ENCODE measurements at regions of chr2 and their contacts with region 1.

Region 1: GRCh38 chr2:130797493-130798435 is 39.0 kb upstream of the ARHGEF4 start:
- DNase-seq: peak; percentile 94
- ATAC-seq: peak; percentile 95
- H3K4me3 Mint-ChIP-seq: peak overlapping the region; percentile 67
- H3K27ac Mint-ChIP-seq: peak overlapping the region; percentile 49
- H3K4me1 Mint-ChIP-seq: peaks cover 14% of the 10 kb centered on the region
- H3K27me3 Mint-ChIP-seq: peaks cover 8% of the 10 kb centered on the region

Region 2: GRCh38 chr2:130776550-130776949 is 21.2 kb before region 1 on chr2:
- CTCF ChIA-PET with region 1: no interaction called
- POLR2A ChIA-PET with region 1: no interaction called
- DNase-seq: no peak
- ATAC-seq: no peak
- H3K4me3 Mint-ChIP-seq: no peak overlapping the region
- H3K27ac Mint-ChIP-seq: no peak overlapping the region
- H3K4me1 Mint-ChIP-seq: no peaks in the 10 kb centered on the region
- H3K27me3 Mint-ChIP-seq: peaks cover 4% of the 10 kb centered on the region

Region 3: GRCh38 chr2:130824492-130825061 is 26.8 kb after region 1 on chr2:
- CTCF ChIA-PET with region 1: interaction called, 17 read pairs
- POLR2A ChIA-PET with region 1: no interaction called
- DNase-seq: peak; percentile 81
- ATAC-seq: peak; percentile 95
- H3K4me3 Mint-ChIP-seq: peak overlapping the region; percentile 4
- H3K27ac Mint-ChIP-seq: peak overlapping the region; percentile 77
- H3K4me1 Mint-ChIP-seq: peaks cover 24% of the 10 kb centered on the region
- H3K27me3 Mint-ChIP-seq: no peaks in the 10 kb centered on the region

Region 4: DNA sequence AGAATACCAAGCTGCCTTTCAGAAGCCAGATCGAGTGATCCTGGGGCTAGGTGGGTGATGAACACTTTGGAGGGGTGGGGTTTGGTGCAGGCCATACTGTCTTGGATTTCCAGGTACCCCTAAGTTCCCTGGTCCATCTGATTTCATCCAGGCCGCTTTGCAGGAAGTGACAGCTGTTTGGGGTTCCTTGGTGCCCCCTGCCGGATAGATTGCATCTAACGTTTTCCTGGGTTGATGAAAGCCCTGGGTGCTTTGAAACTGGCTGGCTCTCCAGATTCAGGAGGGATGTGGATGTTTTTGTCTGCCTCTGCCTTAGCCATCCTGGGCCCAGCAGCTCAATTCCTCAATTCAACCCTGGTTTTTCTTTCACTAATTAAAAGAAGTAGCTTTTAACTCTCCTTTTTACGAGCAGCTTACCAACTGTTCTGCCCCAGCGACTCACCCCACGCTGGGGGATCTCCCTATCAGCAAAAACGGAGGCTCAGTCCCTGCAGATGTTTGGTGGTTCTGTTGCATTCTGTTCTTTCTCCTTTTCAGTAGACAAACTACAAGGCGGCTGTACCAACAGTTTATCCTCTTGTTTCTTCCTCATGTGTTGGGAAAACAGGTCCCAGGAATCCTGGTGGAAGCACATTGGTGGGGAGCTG is 76.1 kb after region 1 on chr2:
- CTCF ChIA-PET with region 1: interaction called, 164 read pairs
- POLR2A ChIA-PET with region 1: interaction called, 14 read pairs
- DNase-seq: peak; percentile 81
- ATAC-seq: peak; percentile 83
- H3K4me3 Mint-ChIP-seq: no peak overlapping the region
- H3K27ac Mint-ChIP-seq: no peak overlapping the region
- H3K4me1 Mint-ChIP-seq: no peaks in the 10 kb centered on the region
- H3K27me3 Mint-ChIP-seq: peaks cover 14% of the 10 kb centered on the region

Region 5: GRCh38 chr2:130920415-130921163 is 122.8 kb after region 1 on chr2:
- CTCF ChIA-PET with region 1: interaction called, 12 read pairs
- POLR2A ChIA-PET with region 1: no interaction called
- DNase-seq: peak; percentile 58
- ATAC-seq: no peak
- H3K4me3 Mint-ChIP-seq: no peak overlapping the region
- H3K27ac Mint-ChIP-seq: no peak overlapping the region
- H3K4me1 Mint-ChIP-seq: no peaks in the 10 kb centered on the region
- H3K27me3 Mint-ChIP-seq: peaks cover 2% of the 10 kb centered on the region

Measured in activated CD8-positive, alpha-beta T cell treated with anti-CD3 and anti-CD28 coated beads, Interleukin-2, amount 10 ng/mL, durations not matched to agents 7 days and 5 days (primary cell).